GM12878 (cell line): ENCODE measurements at regions of chr6 and their contacts with region 1.

Region 1: DNA sequence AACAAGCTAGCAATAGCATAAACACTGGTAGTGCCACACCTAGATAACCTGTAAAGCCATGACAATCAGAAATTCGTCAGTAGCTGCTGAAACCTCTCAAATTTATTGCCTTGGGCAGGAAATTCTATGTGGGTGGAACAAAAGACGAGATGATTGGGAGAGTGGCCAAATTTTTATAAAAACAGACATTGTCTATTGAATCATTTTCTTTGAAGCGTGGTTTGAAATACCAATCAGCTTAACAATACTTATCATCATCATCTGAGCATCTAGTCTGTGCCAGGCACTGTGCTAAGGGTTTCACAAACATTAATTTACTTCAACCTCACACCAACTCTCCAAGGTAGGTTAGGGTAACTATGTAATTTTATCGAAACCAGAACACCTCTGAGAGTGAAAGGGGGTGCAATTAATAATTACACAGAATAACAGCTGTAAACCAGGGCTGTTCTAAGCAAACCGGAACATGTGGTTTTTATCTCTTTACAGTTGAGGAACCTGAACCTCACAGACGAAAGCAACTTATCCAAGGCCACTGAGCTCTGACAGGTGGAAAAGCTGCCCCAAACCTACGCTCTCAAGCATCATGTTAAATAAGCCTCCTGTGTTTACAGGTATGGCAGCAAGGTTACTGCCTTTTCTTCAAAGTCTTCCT is 43.4 kb downstream of the NHSL1 start:
- DNase-seq: peak; percentile 77
- ATAC-seq: peak; percentile 92
- H3K4me3 ChIP-seq: no peak overlapping the region
- H3K27ac ChIP-seq: no peak overlapping the region
- H3K4me1 ChIP-seq: peaks cover 21% of the 10 kb centered on the region
- H3K27me3 ChIP-seq: no peaks in the 10 kb centered on the region
- CTCF ChIP-seq: no peak
- EP300 ChIP-seq: peak; percentile 75 to 83
- POLR2A ChIP-seq: no peak
- RAD21 ChIP-seq: no peak

Region 2: DNA sequence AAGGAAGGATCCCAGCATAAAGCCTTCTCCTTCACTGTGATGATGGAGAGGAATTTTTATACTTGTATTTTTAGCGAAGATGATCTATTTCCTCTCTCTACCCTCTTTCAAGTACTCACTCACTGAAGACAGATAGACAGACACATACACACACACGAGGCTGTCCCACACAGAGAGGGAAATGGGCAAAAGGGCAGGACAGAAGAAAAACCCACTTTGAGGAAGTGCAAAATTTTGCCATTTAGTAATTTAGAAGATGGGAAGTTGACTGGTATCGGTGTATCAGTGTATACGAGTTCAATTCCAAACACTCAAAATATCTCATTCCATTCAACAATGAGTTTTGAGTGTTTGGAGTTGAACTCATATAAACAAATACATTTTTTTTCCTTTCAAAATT is 20.9 kb before region 1 on chr6:
- CTCF ChIA-PET with region 1: interaction called, 7 read pairs
- POLR2A ChIA-PET with region 1: interaction called, 3 read pairs
- RAD21 ChIA-PET with region 1: interaction called, 9 read pairs
- SMC1A ChIA-PET with region 1: interaction called, 15 read pairs
- in situ Hi-C with region 1: no loop called
- intact Hi-C with region 1: no loop called
- DNase-seq: no peak
- ATAC-seq: no peak
- H3K4me3 ChIP-seq: no peak overlapping the region
- H3K27ac ChIP-seq: no peak overlapping the region
- H3K4me1 ChIP-seq: no peaks in the 10 kb centered on the region
- H3K27me3 ChIP-seq: no peaks in the 10 kb centered on the region
- CTCF ChIP-seq: no peak
- EP300 ChIP-seq: no peak
- POLR2A ChIP-seq: no peak
- RAD21 ChIP-seq: no peak

Region 3: GRCh38 chr6:138477913-138478539 is 22.2 kb after region 1 on chr6:
- CTCF ChIA-PET with region 1: interaction called, 10 read pairs
- POLR2A ChIA-PET with region 1: interaction called, 11 read pairs
- RAD21 ChIA-PET with region 1: interaction called, 55 read pairs
- SMC1A ChIA-PET with region 1: interaction called, 35 read pairs
- in situ Hi-C with region 1: no loop called
- intact Hi-C with region 1: no loop called
- DNase-seq: no peak
- ATAC-seq: no peak
- H3K4me3 ChIP-seq: no peak overlapping the region
- H3K27ac ChIP-seq: no peak overlapping the region
- H3K4me1 ChIP-seq: no peaks in the 10 kb centered on the region
- H3K27me3 ChIP-seq: no peaks in the 10 kb centered on the region; a peak in 1 of 4 replicates
- CTCF ChIP-seq: no peak
- EP300 ChIP-seq: no peak
- POLR2A ChIP-seq: no peak
- RAD21 ChIP-seq: no peak

Region 4: DNA sequence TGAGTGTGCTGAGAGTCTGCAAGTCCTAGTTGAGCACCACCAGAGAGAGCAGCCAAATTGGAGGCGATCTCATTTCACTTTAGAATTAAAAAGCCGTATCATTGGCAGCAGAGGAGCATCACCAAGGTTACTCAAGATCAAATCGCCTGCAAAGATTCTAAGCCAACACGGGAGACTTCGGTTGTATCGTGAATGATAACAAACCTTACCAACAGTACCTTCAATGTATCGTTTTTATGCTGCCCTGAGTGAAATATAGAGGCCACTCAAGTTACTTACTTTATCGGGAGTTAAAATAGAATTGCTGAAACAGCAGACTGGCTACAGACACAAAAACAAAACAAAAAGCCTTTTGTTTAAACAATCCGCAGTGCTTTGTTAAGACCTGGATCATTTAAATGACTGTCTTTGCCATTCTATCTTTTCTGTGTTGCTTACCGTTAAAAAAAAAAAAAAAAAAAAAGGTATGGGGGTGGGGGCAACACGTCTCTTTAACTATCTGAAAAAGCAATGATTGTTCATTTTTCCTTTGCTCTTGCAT is 29.2 kb after region 1 on chr6:
- CTCF ChIA-PET with region 1: interaction called, 7 read pairs
- POLR2A ChIA-PET with region 1: interaction called, 12 read pairs
- RAD21 ChIA-PET with region 1: interaction called, 55 read pairs
- SMC1A ChIA-PET with region 1: interaction called, 35 read pairs
- in situ Hi-C with region 1: no loop called
- intact Hi-C with region 1: loop called (anchors 1 kb)
- DNase-seq: no peak
- ATAC-seq: no peak
- H3K4me3 ChIP-seq: no peak overlapping the region
- H3K27ac ChIP-seq: no peak overlapping the region
- H3K4me1 ChIP-seq: no peaks in the 10 kb centered on the region
- H3K27me3 ChIP-seq: no peaks in the 10 kb centered on the region; a peak in 1 of 4 replicates
- CTCF ChIP-seq: no peak
- EP300 ChIP-seq: no peak
- POLR2A ChIP-seq: no peak
- RAD21 ChIP-seq: no peak

Region 5: DNA sequence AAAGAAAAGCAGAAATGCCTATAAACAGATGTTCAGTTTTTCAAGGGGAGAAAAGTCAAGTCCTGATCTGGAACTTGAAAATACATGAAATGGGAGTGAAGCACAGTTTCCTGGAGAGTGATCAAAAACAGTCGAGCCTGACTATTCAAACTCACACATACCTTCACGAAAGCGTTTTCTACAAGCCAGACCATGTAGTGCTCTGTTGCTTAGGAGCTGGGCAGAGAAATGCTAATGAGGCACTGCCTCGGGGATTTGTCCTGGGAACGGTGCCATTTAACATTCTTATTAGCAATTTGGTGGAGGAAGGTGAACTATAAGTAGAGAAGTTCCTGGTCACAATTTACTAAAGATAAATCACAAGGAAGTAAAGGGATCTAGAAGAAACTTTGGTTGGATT is 37.5 kb after region 1 on chr6:
- CTCF ChIA-PET with region 1: interaction called, 24 read pairs
- POLR2A ChIA-PET with region 1: interaction called, 11 read pairs
- RAD21 ChIA-PET with region 1: interaction called, 41 read pairs
- SMC1A ChIA-PET with region 1: interaction called, 88 read pairs
- in situ Hi-C with region 1: no loop called
- intact Hi-C with region 1: loop called (anchors 2 kb)
- DNase-seq: no peak
- ATAC-seq: no peak
- H3K4me3 ChIP-seq: no peak overlapping the region
- H3K27ac ChIP-seq: no peak overlapping the region
- H3K4me1 ChIP-seq: no peaks in the 10 kb centered on the region
- H3K27me3 ChIP-seq: peaks cover 0 to 2% of the 10 kb centered on the region in 2 experiments; a peak in 1 of 4 replicates
- CTCF ChIP-seq: no peak
- EP300 ChIP-seq: no peak
- POLR2A ChIP-seq: no peak
- RAD21 ChIP-seq: no peak